Aorta (tissue), 5 donors: ENCODE measurements at regions of chr19 and their contacts with region 1.

Region 1: GRCh38 chr19:3336680-3337523 is 29.5 kb upstream of the NFIC start:
- DNase-seq: peak; percentile 93 to 96
- ATAC-seq: peak; percentile 93
- H3K4me3 ChIP-seq: no peak overlapping the region
- H3K27ac ChIP-seq: peak overlapping the region; percentile 98
- H3K4me1 ChIP-seq: peaks cover 0 to 4% of the 10 kb centered on the region in 2 donors
- H3K27me3 ChIP-seq: no peaks in the 10 kb centered on the region

Region 2: DNA sequence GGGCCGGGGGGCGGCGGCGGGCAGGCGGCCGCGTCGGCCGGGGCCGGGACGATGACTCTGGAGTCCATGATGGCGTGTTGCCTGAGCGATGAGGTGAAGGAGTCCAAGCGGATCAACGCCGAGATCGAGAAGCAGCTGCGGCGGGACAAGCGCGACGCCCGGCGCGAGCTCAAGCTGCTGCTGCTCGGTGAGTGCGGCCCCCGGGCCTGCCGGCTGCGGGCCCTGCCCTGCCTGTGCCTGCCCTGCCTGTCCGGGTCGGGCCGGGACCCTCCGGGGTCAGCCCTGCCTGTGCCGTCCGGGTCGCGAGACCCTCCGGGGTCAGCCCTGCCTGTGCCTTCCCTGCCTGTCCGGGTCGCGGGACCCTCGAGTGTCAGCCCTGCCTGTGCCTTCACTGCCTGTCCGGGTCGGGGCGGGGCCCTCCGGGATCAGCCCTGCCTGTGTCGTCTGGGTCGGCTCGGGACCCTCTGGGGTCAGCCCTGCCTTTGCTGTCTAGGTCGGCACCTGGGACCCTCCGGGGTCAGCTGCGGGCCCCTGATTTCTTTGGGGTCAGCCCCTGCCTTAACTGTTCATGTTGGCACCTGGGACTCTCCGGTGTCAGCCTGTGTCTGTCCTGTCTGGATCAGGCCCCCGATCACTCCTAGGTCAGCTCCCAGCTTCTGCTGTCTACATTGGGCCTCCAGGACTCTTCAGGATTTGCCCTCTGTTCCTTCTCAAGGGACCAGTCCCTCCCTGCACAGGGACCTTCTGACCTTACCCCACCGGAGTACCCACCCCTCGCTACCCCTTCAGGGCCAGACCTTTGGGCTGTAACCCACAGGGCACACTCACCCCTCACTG is 242.1 kb before region 1 on chr19:
- intact Hi-C with region 1: no loop called
- DNase-seq: peak in 1 of 2 donors; percentile 80
- ATAC-seq: no peak
- H3K4me3 ChIP-seq: peak overlapping the region; percentile 20 to 95
- H3K27ac ChIP-seq: no peak overlapping the region
- H3K4me1 ChIP-seq: no peaks in the 10 kb centered on the region
- H3K27me3 ChIP-seq: no peaks in the 10 kb centered on the region

Region 3: GRCh38 chr19:3116255-3116602 is 220.7 kb before region 1 on chr19:
- intact Hi-C with region 1: no loop called
- DNase-seq: no peak
- ATAC-seq: no peak
- H3K4me3 ChIP-seq: no peak overlapping the region
- H3K27ac ChIP-seq: no peak overlapping the region
- H3K4me1 ChIP-seq: no peaks in the 10 kb centered on the region
- H3K27me3 ChIP-seq: no peaks in the 10 kb centered on the region

Region 4: GRCh38 chr19:3403489-3404323 is 66.8 kb after region 1 on chr19:
- intact Hi-C with region 1: loop called in 1 of 2 experiments (anchors 2 kb)
- DNase-seq: peak; percentile 93 to 97
- ATAC-seq: peak; percentile 87
- H3K4me3 ChIP-seq: peak overlapping the region in 1 of 2 donors; percentile 6
- H3K27ac ChIP-seq: peak overlapping the region; percentile 53 to 78
- H3K4me1 ChIP-seq: peaks cover 0 to 2% of the 10 kb centered on the region in 2 donors
- H3K27me3 ChIP-seq: no peaks in the 10 kb centered on the region

Region 5: GRCh38 chr19:3429581-3430080 is 92.7 kb after region 1 on chr19:
- intact Hi-C with region 1: loop called in 1 of 2 experiments (anchors 5 kb)
- DNase-seq: peak; percentile 95 to 96
- ATAC-seq: peak; percentile 90
- H3K4me3 ChIP-seq: no peak overlapping the region
- H3K27ac ChIP-seq: peak overlapping the region in 1 of 2 donors; percentile 71
- H3K4me1 ChIP-seq: no peaks in the 10 kb centered on the region
- H3K27me3 ChIP-seq: no peaks in the 10 kb centered on the region

Region 6: DNA sequence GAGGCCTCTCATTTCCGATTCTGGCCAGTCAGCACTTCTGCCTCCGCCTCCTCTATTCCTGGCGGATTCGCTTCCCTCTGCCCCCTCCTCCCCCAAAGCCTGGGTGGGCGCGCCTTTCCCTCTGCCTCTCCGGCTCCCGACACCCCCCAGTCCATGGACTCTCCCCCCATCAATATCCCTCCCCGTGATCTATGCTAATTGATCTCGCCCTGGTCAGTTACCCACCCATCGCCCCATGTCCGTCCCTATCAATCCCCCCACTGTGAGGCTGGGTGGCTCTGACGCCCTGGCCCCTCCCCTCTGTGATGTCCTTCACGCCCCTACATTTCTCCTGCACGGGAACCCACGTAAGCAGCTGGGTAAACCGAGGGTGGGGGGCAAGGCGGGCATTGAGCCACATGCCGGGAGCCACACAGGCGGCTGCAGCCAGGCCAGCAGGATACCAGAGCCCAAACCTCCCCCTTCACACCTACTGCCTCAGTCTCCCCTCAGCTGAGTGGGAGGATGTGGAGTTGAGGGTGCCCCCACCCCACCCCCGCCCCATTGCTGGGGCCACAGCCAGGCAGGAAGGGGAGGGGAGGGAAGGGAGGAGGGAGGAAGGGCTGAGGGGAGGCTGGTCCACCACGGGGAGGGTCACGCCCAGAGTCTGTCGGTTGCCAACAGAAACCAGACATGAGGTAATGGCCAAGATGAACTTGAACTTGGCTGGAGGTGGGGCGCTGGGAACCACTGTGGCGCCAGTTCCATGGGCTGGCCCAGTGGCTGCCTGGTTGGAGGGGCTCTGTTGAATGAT is 122.4 kb after region 1 on chr19:
- intact Hi-C with region 1: loop called in 1 of 2 experiments (anchors 5 kb)
- DNase-seq: peak; percentile 96
- ATAC-seq: peak; percentile 91
- H3K4me3 ChIP-seq: no peak overlapping the region
- H3K27ac ChIP-seq: peak overlapping the region; percentile 93 to 96
- H3K4me1 ChIP-seq: peaks cover 0 to 2% of the 10 kb centered on the region in 2 donors
- H3K27me3 ChIP-seq: no peaks in the 10 kb centered on the region